ENCODE measurements at regions of chr9 and their contacts with region 1.

Region 1: GRCh38 chr9:35954942-35955546 is 2.9 kb downstream of the OR2S2 start:
- DNase-seq: peak; percentile 66
- H3K27ac ChIP-seq: no peak overlapping the region
- CTCF ChIP-seq: peak; percentile 99

Region 2: DNA sequence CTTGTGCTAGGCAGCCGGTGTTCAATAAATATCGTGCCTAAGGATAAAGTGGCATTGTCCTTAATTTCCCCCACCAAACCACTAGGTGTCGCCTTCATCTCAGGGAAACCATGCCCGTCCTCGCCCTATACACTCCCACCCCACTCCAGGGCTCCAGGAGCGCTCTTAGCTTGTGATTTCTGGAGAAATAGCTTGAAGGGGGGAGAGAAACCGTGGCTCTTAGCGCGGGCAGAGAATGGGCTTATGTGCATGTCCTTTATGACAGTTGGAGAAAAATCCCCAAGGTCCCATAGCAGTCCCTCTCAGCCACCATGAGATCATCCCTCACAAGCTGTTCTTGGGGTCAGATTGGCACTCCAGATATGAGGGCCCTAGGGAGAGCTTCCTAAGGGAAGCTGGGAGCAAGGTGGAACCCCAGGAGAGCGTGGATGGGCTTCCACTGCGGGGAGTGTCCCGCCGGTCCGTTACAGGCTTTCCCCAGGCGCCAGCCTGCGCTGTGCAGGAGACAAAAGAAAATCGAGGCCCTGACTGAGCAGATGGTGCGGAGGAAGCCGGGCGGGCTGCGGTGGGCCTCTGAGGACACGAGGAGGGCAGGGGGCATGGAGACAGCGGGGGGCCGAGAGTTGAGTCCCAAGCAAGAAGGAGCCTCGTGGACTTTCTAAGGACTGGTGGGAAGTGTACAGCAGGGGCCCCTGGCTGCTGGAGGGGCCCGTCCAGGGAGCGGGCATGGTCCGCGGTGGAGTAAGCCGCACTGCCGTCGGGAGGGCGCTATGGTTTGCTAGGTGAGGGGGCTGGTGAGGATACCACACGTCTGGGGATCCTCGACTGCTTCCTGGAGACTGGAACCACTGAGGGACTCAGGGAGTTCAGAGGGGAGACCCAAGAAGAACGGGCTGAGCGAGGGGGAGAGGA is 164.4 kb before region 1 on chr9:
- CTCF ChIA-PET with region 1: no interaction called
- POLR2A ChIA-PET with region 1: no interaction called
- DNase-seq: peak; percentile 91
- H3K27ac ChIP-seq: peak overlapping the region; percentile 68
- CTCF ChIP-seq: peak; percentile 97

Region 3: GRCh38 chr9:35944173-35944572 is 10.9 kb before region 1 on chr9:
- CTCF ChIA-PET with region 1: interaction called, 13 read pairs
- POLR2A ChIA-PET with region 1: no interaction called
- DNase-seq: no peak
- H3K27ac ChIP-seq: no peak overlapping the region
- CTCF ChIP-seq: no peak

Region 4: DNA sequence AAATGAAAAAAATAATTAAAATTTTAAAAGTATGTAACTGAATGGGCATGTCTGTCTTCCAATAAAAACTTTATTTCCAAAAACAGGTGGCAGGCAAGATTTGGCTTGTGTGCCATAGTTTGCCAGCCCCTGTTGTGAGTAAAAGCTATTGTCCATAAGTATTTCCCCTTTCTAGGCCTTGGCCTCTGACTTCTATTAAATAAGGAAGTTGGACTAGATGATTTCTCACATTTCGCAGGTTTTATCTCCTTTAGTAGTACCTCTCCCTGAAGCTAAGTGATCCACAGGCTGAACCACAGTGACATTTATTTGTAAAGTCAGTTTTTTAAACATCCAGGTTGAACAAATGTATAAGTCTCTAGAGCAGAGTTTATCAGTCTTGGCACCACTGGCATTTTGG is 123.0 kb after region 1 on chr9:
- CTCF ChIA-PET with region 1: no interaction called
- POLR2A ChIA-PET with region 1: no interaction called
- DNase-seq: no peak
- H3K27ac ChIP-seq: no peak overlapping the region
- CTCF ChIP-seq: no peak